ENCODE measurements at regions of chr3 and their contacts with region 1.

Region 1: GRCh38 chr3:27312044-27312668 is 57.0 kb downstream of the NEK10 start:
- DNase-seq: no peak
- ATAC-seq: peak; percentile 33 to 76 (median 61)
- H3K4me3 ChIP-seq: no peak overlapping the region
- H3K27ac ChIP-seq: no peak overlapping the region
- H3K4me1 ChIP-seq: peaks cover 0 to 4% (median 0%) of the 10 kb centered on the region in 12 donors
- H3K27me3 ChIP-seq: no peaks in the 10 kb centered on the region
- CTCF ChIP-seq: peak; percentile 72 to 86 (median 80)
- POLR2A ChIP-seq: no peak

Region 2: DNA sequence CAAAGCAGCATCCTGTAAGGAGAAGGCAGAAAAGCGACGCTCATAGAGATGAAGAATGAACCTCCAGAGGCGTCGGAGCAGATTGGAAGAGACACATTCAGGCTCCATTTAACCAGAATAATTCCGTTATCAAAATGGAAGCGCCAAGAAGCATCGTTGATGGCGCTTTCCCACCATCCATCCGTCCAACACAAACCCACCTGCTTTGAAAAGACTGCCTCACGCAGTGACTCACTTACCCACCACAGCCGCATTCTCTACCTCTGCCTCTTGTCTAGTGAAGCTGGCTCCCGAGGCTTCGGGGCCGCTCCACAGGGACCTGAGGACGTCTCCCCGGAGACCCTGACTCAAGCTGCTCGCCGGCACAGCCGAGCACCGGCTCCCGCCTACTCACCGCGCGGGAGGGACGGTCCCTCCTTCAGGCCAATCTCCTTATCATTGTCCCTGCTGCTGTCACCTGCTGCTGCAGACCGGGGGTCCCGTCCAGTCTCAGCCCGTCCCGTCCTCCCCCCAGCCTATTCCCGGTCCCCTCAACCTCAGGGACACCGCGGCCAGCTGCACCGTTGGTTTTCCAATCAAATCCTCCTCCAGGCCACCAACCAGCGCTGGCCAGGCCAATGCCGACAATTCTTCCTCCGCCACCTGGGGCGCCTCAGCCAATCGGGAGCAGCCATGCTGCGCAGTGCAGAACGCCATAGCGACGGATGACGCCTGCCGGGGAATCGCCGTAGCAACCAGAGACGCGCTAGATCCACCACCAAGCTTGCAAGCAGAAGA is 56.9 kb after region 1 on chr3 and contains the start of gene NEK10:
- intact Hi-C with region 1: loop called in 1 of 10 experiments (anchors 5 kb)
- DNase-seq: peak; percentile 88 to 93 (median 89)
- ATAC-seq: peak; percentile 97 to 100 (median 100)
- H3K4me3 ChIP-seq: peak within 1 kb of the TSS; percentile 37 to 87 (median 63)
- H3K27ac ChIP-seq: no peak within 1 kb of the TSS
- H3K4me1 ChIP-seq: peaks cover 0 to 13% (median 2%) of the 10 kb centered on the region in 12 donors
- H3K27me3 ChIP-seq: no peaks in the 10 kb centered on the region
- CTCF ChIP-seq: peak in 2 of 12 donors; percentile 25 to 28
- POLR2A ChIP-seq: no peak
- total RNA-seq, gene NEK10: 3.4 to 22.5 (median 8.5) TPM

Region 3: GRCh38 chr3:27467545-27467944 is 155.4 kb after region 1 on chr3:
- intact Hi-C with region 1: loop called in 9 of 10 experiments (anchors 2 to 5 kb)
- DNase-seq: no peak
- ATAC-seq: peak in 2 of 4 donors; percentile 68 to 70
- H3K4me3 ChIP-seq: no peak overlapping the region
- H3K27ac ChIP-seq: no peak overlapping the region
- H3K4me1 ChIP-seq: peaks cover 0 to 22% (median 6%) of the 10 kb centered on the region in 12 donors
- H3K27me3 ChIP-seq: no peaks in the 10 kb centered on the region
- CTCF ChIP-seq: peak; percentile 24 to 64 (median 42)
- POLR2A ChIP-seq: no peak

Region 4: GRCh38 chr3:27659279-27660021 is 347.3 kb after region 1 on chr3:
- intact Hi-C with region 1: loop called in 5 of 10 experiments (anchors 2 to 10 kb)
- DNase-seq: peak; percentile 33 to 71 (median 40)
- ATAC-seq: peak in 3 of 4 donors; percentile 45 to 71 (median 57)
- H3K4me3 ChIP-seq: no peak overlapping the region
- H3K27ac ChIP-seq: no peak overlapping the region
- H3K4me1 ChIP-seq: no peaks in the 10 kb centered on the region
- H3K27me3 ChIP-seq: no peaks in the 10 kb centered on the region
- CTCF ChIP-seq: peak; percentile 71 to 83 (median 77)
- POLR2A ChIP-seq: no peak

Region 5: GRCh38 chr3:27681245-27681748 is 369.1 kb after region 1 on chr3:
- intact Hi-C with region 1: loop called (anchors 2 to 10 kb)
- DNase-seq: peak in 1 of 5 donors; percentile 26
- ATAC-seq: peak in 2 of 4 donors; percentile 42 to 59
- H3K4me3 ChIP-seq: peak overlapping the region in 2 of 12 donors; percentile 7 to 15
- H3K27ac ChIP-seq: peak overlapping the region in 2 of 12 donors; percentile 35 to 55
- H3K4me1 ChIP-seq: peaks cover 0 to 17% (median 0%) of the 10 kb centered on the region in 12 donors
- H3K27me3 ChIP-seq: no peaks in the 10 kb centered on the region
- CTCF ChIP-seq: peak; percentile 29 to 72 (median 60)
- POLR2A ChIP-seq: no peak